Left cardiac atrium (tissue), 4 donors: ENCODE measurements at regions of chr9 and their contacts with region 1.

Region 1: GRCh38 chr9:107465467-107466451 is 23.8 kb downstream of the KLF4 start:
- DNase-seq: peak; percentile 86
- ATAC-seq: peak; percentile 98 to 100

Region 2: DNA sequence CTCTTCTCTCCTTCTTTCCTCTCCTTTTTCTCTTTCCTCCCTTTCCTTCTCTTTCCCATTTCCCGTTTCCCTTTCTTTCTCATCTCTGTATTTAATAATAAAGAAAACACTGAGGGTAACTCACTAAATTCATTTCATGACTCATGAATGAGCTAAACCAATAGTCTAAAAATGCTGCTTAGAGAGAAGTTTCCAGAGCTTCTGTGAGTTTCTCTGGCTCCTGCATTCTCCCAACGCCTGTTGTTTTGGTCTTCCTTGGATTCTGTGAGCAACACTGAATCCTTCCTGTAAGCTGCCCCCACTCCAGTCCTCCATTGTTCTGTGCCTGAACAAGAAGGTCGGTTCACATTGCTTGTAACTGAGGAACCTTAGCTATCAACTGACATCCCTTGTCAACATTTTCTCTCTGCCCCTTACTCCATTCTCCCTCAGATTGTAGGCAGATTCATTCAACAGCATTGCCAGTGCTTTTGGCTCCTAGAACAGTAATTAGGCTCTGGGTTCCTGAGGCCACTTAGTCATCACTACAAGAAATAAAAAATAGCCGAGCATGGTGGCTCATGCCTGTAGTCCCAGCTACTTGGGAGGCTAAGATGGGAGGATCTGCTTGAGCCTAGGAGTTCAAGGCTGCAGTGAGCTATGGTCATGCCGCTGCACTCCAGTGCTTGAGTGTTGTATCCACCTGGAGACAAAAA is 261.5 kb after region 1 on chr9:
- intact Hi-C with region 1: no loop called
- DNase-seq: no peak
- ATAC-seq: no peak

Region 3: GRCh38 chr9:108751369-108751768 is 1285.6 kb after region 1 on chr9:
- intact Hi-C with region 1: loop called in 1 of 2 experiments (anchors 5 kb)
- DNase-seq: no peak
- ATAC-seq: no peak